Activated CD8-positive, alpha-beta T cell treated with anti-CD3 and anti-CD28 coated beads, Interleukin-2, amount 10 ng/mL, durations not matched to agents 7 days and 5 days (primary cell): ENCODE measurements at regions of chr2 and their contacts with region 1.

Region 1: DNA sequence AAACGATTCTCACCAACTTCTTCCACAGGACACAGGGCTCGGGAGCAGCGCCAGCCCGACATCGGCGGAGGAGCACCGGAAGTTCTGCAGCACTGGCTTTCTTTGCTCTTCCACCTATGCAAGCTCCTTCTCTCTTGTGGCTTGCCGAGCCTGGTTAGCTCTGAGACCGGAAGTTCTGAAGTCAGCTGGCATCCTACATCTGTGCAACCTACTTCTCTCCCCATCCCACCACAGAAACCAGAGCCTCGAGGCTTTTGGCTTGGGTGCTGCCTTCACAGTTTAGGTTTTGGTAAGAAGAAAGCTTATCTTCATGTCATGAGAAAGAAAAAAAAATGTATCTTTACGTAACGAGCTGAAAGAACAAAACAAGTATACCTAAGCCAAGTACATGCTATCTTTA is 111.7 kb downstream of the ANKRD44 start:
- DNase-seq: peak; percentile 97
- ATAC-seq: peak; percentile 82
- H3K4me3 Mint-ChIP-seq: peak overlapping the region; percentile 81
- H3K27ac Mint-ChIP-seq: peak overlapping the region; percentile 93
- H3K4me1 Mint-ChIP-seq: peaks cover 89% of the 10 kb centered on the region
- H3K27me3 Mint-ChIP-seq: no peaks in the 10 kb centered on the region

Region 2: DNA sequence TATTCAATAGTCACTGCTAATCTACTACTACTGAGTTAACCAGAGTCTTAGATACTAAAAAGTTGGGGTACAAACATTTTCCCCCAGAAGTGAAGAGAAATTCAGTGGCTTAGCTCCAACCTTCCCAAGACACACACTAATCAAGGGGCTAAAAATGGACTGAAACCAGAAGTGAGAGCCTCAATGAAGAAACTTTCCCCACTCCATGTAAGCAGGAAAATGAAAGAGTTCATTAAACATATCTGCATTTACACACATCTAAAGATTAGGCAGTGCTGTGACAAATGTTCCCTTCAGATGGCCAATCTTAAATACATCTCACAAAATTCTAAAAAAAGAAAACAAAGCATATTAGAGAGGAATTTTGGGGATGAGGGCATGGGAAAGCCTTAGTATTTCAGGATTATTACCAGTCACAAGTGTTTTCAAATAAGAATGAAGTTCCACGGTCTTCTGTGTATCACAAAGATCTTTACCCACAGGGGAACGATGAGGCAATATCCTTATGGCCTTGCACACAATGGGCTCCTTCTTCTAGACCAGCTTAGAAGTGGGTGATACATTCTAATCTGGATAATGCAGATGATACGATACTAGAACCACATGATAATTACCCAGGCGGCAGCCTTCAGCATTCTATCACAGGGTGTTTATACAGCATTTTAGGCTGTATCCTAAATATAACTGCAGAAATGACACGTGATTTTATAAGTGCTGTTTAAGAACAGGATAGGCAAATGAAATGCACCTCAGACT is 94.5 kb after region 1 on chr2:
- CTCF ChIA-PET with region 1: interaction called, 7 read pairs
- POLR2A ChIA-PET with region 1: interaction called, 15 read pairs
- DNase-seq: peak; percentile 55
- ATAC-seq: peak; percentile 69
- H3K4me3 Mint-ChIP-seq: peak overlapping the region; percentile 71
- H3K27ac Mint-ChIP-seq: peak overlapping the region; percentile 93
- H3K4me1 Mint-ChIP-seq: peaks cover 87% of the 10 kb centered on the region
- H3K27me3 Mint-ChIP-seq: no peaks in the 10 kb centered on the region

Region 3: GRCh38 chr2:197442857-197443256 is 244.0 kb after region 1 on chr2:
- CTCF ChIA-PET with region 1: no interaction called
- POLR2A ChIA-PET with region 1: no interaction called
- DNase-seq: no peak
- ATAC-seq: no peak
- H3K4me3 Mint-ChIP-seq: no peak overlapping the region
- H3K27ac Mint-ChIP-seq: no peak overlapping the region
- H3K4me1 Mint-ChIP-seq: no peaks in the 10 kb centered on the region
- H3K27me3 Mint-ChIP-seq: no peaks in the 10 kb centered on the region